Natural killer cell (primary cell): ENCODE measurements at regions of chrX and their contacts with region 1.

Region 1: GRCh38 chrX:65595460-65595876 is 60.9 kb upstream of the LAS1L start:
- DNase-seq: peak; percentile 82 to 94
- ATAC-seq: peak; percentile 80 to 97 (median 88)
- H3K4me3 ChIP-seq: no peak overlapping the region
- H3K4me3 Mint-ChIP-seq: peak overlapping the region; percentile 77
- H3K27ac ChIP-seq: peak overlapping the region; percentile 97
- H3K27ac Mint-ChIP-seq: peak overlapping the region; percentile 83 to 85
- H3K4me1 ChIP-seq: peaks cover 47% of the 10 kb centered on the region
- H3K4me1 Mint-ChIP-seq: peaks cover 37 to 48% of the 10 kb centered on the region in 2 donors
- H3K27me3 ChIP-seq: no peaks in the 10 kb centered on the region
- H3K27me3 Mint-ChIP-seq: no peaks in the 10 kb centered on the region
- CTCF ChIP-seq: peak; percentile 86

Region 2: DNA sequence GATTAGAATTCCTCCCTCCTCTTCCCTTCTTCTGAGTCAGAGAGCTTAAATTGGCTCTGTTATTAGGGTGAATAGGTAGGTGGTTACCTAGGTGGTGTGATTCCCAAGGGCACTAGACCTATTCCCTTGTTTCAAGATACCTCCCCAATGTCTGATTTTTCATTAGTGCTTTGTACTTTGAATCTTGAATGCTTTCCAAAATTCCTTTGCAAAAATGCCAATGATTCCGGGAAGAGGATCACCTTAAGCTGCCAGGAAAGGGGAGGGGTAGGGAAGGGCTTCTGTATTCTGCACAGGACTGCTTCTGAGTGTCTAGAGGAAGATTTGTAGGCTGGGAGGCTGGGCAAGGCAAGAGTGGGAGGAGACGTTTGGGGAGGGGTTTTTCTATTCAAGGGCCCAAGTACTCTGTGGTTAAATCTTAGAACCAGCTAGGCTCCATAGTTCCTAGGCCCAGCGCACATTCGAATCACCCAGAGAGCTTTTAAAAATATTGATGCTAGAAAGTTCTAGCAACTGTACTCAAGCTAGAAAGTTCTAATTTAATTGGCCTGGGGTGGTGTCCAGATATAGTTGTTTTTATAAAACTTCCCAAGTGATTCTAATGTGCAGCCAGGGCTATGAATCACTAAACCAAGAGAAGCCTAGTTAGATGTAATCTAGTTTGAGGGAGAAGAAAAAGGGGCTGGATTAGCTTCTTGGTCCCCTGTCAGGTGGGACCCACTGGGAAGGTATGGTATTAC is 47.7 kb after region 1 on chrX:
- intact Hi-C with region 1: no loop called
- DNase-seq: no peak
- ATAC-seq: no peak
- H3K4me3 ChIP-seq: no peak overlapping the region
- H3K4me3 Mint-ChIP-seq: no peak overlapping the region
- H3K27ac ChIP-seq: no peak overlapping the region
- H3K27ac Mint-ChIP-seq: no peak overlapping the region
- H3K4me1 ChIP-seq: no peaks in the 10 kb centered on the region
- H3K4me1 Mint-ChIP-seq: peaks cover 10 to 27% of the 10 kb centered on the region in 2 donors
- H3K27me3 ChIP-seq: no peaks in the 10 kb centered on the region
- H3K27me3 Mint-ChIP-seq: peaks cover 0 to 8% of the 10 kb centered on the region in 2 donors
- CTCF ChIP-seq: no peak

Region 3: DNA sequence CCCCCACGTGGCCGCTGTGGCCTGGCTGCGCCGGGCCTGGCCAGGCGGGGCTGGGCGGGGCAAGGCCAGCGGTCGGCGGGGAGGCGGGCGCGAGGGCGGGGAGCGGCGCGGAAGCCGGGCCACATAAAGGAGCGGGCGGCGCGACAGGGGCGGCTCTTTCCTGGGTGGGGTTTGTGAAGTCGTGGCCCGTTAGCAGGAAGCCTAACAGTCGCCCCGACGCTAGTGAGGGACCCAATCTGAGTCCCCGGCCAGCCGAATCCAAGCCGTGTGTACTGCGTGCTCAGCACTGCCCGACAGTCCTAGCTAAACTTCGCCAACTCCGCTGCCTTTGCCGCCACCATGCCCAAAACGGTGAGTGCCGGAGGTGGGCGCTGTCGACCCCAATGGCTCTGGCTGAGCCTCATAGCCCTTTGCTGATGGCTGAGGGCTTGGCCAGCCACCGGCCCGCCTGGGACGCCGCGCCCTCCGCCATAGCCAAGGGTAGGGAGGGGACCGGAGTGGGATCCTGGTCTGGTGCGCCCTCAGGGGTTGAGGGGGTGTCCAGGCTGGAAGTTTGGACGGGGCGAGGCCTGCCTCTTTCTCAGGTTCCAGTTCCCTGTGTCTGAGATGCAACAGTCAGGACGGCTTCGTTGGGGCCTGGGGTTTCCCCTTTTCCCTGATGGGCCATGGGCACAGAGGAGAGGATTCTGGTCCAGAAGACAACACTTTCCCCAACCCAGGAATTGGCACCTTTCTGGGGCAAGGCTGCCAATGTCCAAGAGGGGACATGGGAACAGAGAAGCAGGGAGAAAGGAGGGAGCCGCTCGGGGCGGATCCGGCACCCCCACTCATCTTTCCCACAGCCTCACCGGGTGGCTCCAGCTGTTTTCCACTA is 72.3 kb after region 1 on chrX and contains the start of gene MSN:
- intact Hi-C with region 1: loop called (anchors 2 kb)
- DNase-seq: peak; percentile 69 to 80
- ATAC-seq: peak; percentile 69 to 89 (median 86)
- H3K4me3 ChIP-seq: peak within 1 kb of the TSS; percentile 96
- H3K4me3 Mint-ChIP-seq: peak within 1 kb of the TSS; percentile 86
- H3K27ac ChIP-seq: peak within 1 kb of the TSS; percentile 88
- H3K27ac Mint-ChIP-seq: peak within 1 kb of the TSS; percentile 94 to 97
- H3K4me1 ChIP-seq: peaks cover 18% of the 10 kb centered on the region
- H3K4me1 Mint-ChIP-seq: peaks cover 56 to 75% of the 10 kb centered on the region in 2 donors
- H3K27me3 ChIP-seq: no peaks in the 10 kb centered on the region
- H3K27me3 Mint-ChIP-seq: no peaks in the 10 kb centered on the region
- CTCF ChIP-seq: no peak
- total RNA-seq, gene MSN: 866 to 1,028 (median 919) TPM

Region 4: GRCh38 chrX:65697915-65698796 is 102.7 kb after region 1 on chrX:
- intact Hi-C with region 1: loop called (anchors 1 kb)
- DNase-seq: peak; percentile 49 to 79
- ATAC-seq: peak; percentile 59 to 80 (median 68)
- H3K4me3 ChIP-seq: peak overlapping the region; percentile 3
- H3K4me3 Mint-ChIP-seq: peak overlapping the region; percentile 81
- H3K27ac ChIP-seq: peak overlapping the region; percentile 85
- H3K27ac Mint-ChIP-seq: peak overlapping the region; percentile 86 to 98
- H3K4me1 ChIP-seq: peaks cover 85% of the 10 kb centered on the region
- H3K4me1 Mint-ChIP-seq: peaks cover 83 to 96% of the 10 kb centered on the region in 2 donors
- H3K27me3 ChIP-seq: no peaks in the 10 kb centered on the region
- H3K27me3 Mint-ChIP-seq: no peaks in the 10 kb centered on the region
- CTCF ChIP-seq: no peak